T-cell (primary cell): ENCODE measurements at regions of chr2 and their contacts with region 1.

Region 1: GRCh38 chr2:112626604-112627059 is 19.1 kb upstream of the SLC20A1 start:
- DNase-seq: peak in 34 of 35 experiments; percentile 32 to 79 (median 54)
- ATAC-seq: peak; percentile 43 to 57 (median 53)
- H3K4me3 ChIP-seq: peak overlapping the region; percentile 1 to 44
- H3K4me3 Mint-ChIP-seq: peak overlapping the region; percentile 62 to 69 (median 62)
- H3K27ac ChIP-seq: peak overlapping the region; percentile 8
- H3K27ac Mint-ChIP-seq: peak overlapping the region; percentile 87 to 96
- H3K4me1 ChIP-seq: peaks cover 32 to 74% of the 10 kb centered on the region in 2 experiments
- H3K4me1 Mint-ChIP-seq: peaks cover 62 to 78% (median 68%) of the 10 kb centered on the region in 3 donors
- H3K27me3 ChIP-seq: no peaks in the 10 kb centered on the region
- H3K27me3 Mint-ChIP-seq: no peaks in the 10 kb centered on the region

Region 2: GRCh38 chr2:112645310-112646101 is 18.9 kb after region 1 on chr2 and contains the start of gene SLC20A1:
- CTCF ChIA-PET with region 1: interaction called, 4 to 26 read pairs
- POLR2A ChIA-PET with region 1: interaction called, 5 to 6 read pairs
- DNase-seq: peak; percentile 92 to 99 (median 97)
- ATAC-seq: peak; percentile 92 to 96 (median 92)
- H3K4me3 ChIP-seq: peak within 1 kb of the TSS; percentile 75 to 90
- H3K4me3 Mint-ChIP-seq: peak within 1 kb of the TSS; percentile 85 to 92 (median 88)
- H3K27ac ChIP-seq: peak within 1 kb of the TSS; percentile 75
- H3K27ac Mint-ChIP-seq: peak within 1 kb of the TSS; percentile 86 to 91
- H3K4me1 ChIP-seq: peaks cover 25 to 31% of the 10 kb centered on the region in 2 experiments
- H3K4me1 Mint-ChIP-seq: peaks cover 51 to 59% (median 52%) of the 10 kb centered on the region in 3 donors
- H3K27me3 ChIP-seq: no peaks in the 10 kb centered on the region
- H3K27me3 Mint-ChIP-seq: no peaks in the 10 kb centered on the region
- total RNA-seq, gene SLC20A1: 65.8 to 135 (median 83.0) TPM

Region 3: DNA sequence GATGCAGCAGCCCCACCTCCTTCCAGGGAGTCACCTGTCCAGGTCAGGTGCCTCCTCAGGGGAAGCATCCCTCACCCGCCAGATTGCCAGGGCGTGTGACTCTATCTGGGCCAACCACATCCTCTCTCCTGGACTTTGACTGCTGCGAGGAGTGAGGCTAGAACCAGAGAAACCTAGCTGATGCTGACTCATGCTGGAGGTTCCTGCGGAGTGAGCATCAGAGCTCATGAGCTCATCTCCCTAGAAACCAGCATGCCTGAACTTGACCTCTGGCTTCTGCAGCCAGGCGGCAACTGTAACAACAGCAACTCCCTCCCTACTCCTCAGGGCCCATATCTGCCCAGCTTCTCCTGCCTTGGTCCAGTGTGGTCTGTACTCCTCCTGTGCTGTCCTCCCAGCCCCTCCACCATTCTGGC is 65.9 kb after region 1 on chr2:
- CTCF ChIA-PET with region 1: interaction called, 11 to 40 read pairs
- POLR2A ChIA-PET with region 1: interaction called in 1 of 2 experiments, 6 read pairs
- DNase-seq: peak in 31 of 35 experiments; percentile 5 to 58 (median 21)
- ATAC-seq: peak; percentile 72 to 90 (median 80)
- H3K4me3 ChIP-seq: no peak overlapping the region
- H3K4me3 Mint-ChIP-seq: no peak overlapping the region
- H3K27ac ChIP-seq: peak overlapping the region; percentile 27
- H3K27ac Mint-ChIP-seq: peak overlapping the region; percentile 53 to 86
- H3K4me1 ChIP-seq: peaks cover 4 to 30% of the 10 kb centered on the region in 2 experiments
- H3K4me1 Mint-ChIP-seq: peaks cover 28 to 32% (median 29%) of the 10 kb centered on the region in 3 donors
- H3K27me3 ChIP-seq: no peaks in the 10 kb centered on the region
- H3K27me3 Mint-ChIP-seq: no peaks in the 10 kb centered on the region

Region 4: GRCh38 chr2:112726497-112727190 is 100.0 kb after region 1 on chr2:
- CTCF ChIA-PET with region 1: interaction called, 4 to 29 read pairs
- POLR2A ChIA-PET with region 1: interaction called in 1 of 2 experiments, 3 read pairs
- DNase-seq: peak; percentile 65 to 92 (median 82)
- ATAC-seq: peak; percentile 92 to 99 (median 96)
- H3K4me3 ChIP-seq: no peak overlapping the region
- H3K4me3 Mint-ChIP-seq: no peak overlapping the region
- H3K27ac ChIP-seq: no peak overlapping the region
- H3K27ac Mint-ChIP-seq: no peak overlapping the region
- H3K4me1 ChIP-seq: peaks cover 0 to 9% of the 10 kb centered on the region in 2 experiments
- H3K4me1 Mint-ChIP-seq: peaks cover 5 to 8% (median 5%) of the 10 kb centered on the region in 3 donors
- H3K27me3 ChIP-seq: peaks cover 0 to 35% of the 10 kb centered on the region in 2 experiments
- H3K27me3 Mint-ChIP-seq: peaks cover 0 to 4% of the 10 kb centered on the region in 2 donors